ENCODE measurements at regions of chr11 and their contacts with region 1.

Region 1: DNA sequence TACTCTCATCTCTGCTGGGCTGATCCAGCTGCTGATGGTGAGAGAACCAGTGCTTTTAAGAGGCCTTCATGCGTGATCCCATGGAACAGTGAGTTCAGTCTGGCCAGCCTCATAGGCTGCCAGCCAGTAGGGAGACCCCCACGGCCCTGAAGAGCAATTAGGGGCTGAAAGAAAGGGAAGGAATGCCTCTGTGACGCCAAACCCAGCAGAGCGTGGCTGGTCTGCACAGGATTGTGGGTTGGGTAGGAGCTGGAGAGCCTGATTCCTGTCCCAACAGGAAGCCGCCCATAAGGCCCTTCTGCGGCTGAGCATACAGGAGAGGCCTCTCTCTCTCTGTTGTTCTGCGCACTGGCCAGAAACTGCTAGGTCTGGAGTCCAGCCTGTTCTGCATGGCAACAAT is 181.5 kb upstream of the E2F8 start:
- DNase-seq: no peak
- H3K4me3 ChIP-seq: no peak overlapping the region
- H3K27ac ChIP-seq: no peak overlapping the region
- H3K4me1 ChIP-seq: peaks cover 0 to 4% (median 0%) of the 10 kb centered on the region in 4 donors
- H3K27me3 ChIP-seq: peaks cover 0 to 2% of the 10 kb centered on the region in 2 donors
- CTCF ChIP-seq: no peak

Region 2: DNA sequence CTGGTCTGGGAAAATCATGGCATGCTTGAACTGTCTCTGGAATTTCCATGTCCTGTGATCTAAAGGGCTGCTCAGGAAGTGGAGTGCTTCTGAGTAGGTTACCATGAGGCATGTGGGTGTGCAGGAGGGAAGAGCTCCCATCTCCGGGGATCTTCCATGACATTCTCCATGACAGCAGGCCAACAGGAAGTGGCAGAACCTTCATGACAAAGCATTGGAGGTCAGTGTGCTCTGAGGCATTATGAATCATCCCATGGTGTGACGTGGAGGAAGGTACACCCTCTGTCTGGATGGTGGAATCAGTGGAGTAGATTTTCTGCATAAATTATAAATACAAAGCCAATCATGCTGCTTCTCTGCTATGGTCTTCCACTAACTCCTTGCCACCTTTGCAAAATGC is 41.9 kb before region 1 on chr11:
- intact Hi-C with region 1: loop called (anchors 2 kb)
- DNase-seq: no peak
- H3K4me3 ChIP-seq: no peak overlapping the region
- H3K27ac ChIP-seq: no peak overlapping the region
- H3K4me1 ChIP-seq: no peaks in the 10 kb centered on the region
- H3K27me3 ChIP-seq: peaks cover 0 to 34% of the 10 kb centered on the region in 2 donors
- CTCF ChIP-seq: no peak

Region 3: DNA sequence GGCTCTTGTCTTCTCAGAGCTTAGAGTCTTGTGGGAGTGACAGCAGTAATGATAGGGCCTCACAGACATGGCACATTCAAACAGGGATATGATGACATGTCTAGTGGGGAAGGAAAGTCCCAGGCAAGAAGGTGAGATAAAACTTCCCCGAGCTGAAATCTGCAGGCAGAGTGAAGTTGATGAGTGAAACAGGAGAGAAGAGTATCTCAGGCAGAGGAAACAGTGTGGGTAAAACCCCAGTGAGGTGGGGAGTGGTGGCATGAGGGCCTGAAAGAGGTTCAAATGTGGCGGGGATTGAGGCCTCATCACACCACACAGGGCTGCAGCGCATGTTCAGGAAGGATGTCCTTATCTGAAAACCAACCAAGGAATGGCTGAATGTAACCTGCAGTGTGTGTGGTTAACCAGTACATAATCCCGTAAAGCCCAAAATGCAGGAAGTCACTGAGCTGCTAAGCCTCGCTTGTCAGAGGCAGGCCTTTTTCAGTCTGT is 27.7 kb before region 1 on chr11:
- intact Hi-C with region 1: no loop called
- DNase-seq: no peak
- H3K4me3 ChIP-seq: no peak overlapping the region
- H3K27ac ChIP-seq: no peak overlapping the region
- H3K4me1 ChIP-seq: no peaks in the 10 kb centered on the region
- H3K27me3 ChIP-seq: no peaks in the 10 kb centered on the region
- CTCF ChIP-seq: no peak

Measured in tibial artery (tissue), 4 donors.